ENCODE measurements at regions of chr2 and their contacts with region 1.

Region 1: DNA sequence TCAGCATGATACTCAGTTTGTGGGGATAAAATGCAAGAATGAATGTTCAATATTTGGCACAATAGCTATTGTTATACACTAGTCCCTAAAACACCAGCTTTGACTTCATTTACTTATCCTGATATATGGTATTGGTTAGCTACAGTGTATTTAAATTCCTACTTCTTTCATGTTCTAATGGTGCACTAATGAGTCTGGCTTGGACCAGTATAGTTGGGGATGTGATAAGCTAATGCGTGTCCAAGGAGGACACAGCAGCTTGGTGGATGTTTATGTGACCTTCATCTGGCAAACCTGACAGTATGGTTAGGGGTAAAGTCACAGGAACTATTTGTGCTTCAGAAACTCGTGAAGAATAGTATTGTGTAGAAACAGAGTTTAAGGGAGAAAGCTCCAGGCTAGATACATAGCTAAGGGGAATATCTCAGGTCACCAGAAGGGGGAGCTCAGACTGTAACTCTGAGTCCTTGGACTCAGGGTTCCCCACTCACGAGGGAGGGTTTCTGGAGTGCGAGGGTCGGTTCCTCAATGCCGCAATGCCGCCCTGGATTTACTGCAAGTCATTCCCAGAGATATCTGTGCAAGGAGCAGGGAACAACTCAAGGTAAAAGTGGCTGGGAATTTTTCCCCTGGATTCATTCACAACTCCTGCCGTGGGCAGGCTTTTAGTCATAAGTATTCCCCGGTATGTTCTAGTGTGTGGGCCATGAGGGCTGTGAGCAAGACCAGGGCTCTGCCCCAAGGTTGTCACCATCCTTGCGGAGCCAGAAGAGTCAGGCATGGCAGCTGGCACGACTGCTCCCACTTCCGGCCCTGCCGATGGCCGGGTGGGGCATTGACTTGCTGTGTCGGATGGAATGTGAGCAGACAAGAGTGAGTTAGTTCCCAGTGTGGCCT is 14.5 kb downstream of the IL1R2 start:
- DNase-seq: peak in 1 of 4 donors; percentile 57
- ATAC-seq: peak; percentile 86
- H3K4me3 ChIP-seq: no peak overlapping the region
- H3K27ac ChIP-seq: no peak overlapping the region
- H3K4me1 ChIP-seq: peaks cover 12 to 35% of the 10 kb centered on the region in 2 donors
- H3K27me3 ChIP-seq: no peaks in the 10 kb centered on the region
- CTCF ChIP-seq: peak; percentile 58 to 59

Region 2: GRCh38 chr2:101546376-101547058 is 459.7 kb before region 1 on chr2:
- intact Hi-C with region 1: no loop called
- DNase-seq: no peak
- ATAC-seq: peak; percentile 76
- H3K4me3 ChIP-seq: no peak overlapping the region
- H3K27ac ChIP-seq: no peak overlapping the region
- H3K4me1 ChIP-seq: peaks cover 0 to 4% of the 10 kb centered on the region in 2 donors
- H3K27me3 ChIP-seq: no peaks in the 10 kb centered on the region
- CTCF ChIP-seq: no peak

Region 3: DNA sequence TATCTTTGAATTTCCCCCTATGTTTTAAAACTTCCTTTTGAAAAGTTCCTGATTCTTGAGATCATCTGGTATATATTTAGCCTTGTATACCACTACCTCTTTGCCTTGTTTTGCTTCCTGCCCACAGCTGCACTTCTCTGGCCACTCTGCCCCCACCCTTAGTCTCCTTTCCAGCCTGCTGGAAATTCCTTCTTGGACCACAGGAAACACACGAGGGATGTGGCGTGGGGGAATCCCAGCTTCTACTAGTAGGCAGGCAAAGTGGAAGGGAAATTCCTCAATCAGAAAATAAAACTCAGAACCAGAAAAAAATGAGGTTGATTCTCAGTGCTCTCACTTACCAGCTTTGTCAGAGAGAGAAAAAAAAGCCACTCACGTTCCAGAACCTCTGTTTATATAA is 430.1 kb after region 1 on chr2:
- intact Hi-C with region 1: loop called in 1 of 2 experiments (anchors 10 kb)
- DNase-seq: peak in 1 of 4 donors; percentile 17
- ATAC-seq: peak; percentile 12
- H3K4me3 ChIP-seq: no peak overlapping the region
- H3K27ac ChIP-seq: peak overlapping the region in 1 of 2 donors; percentile 42
- H3K4me1 ChIP-seq: peaks cover 0 to 21% of the 10 kb centered on the region in 2 donors
- H3K27me3 ChIP-seq: no peaks in the 10 kb centered on the region
- CTCF ChIP-seq: no peak